ENCODE measurements at regions of chr9 and their contacts with region 1.

Region 1: DNA sequence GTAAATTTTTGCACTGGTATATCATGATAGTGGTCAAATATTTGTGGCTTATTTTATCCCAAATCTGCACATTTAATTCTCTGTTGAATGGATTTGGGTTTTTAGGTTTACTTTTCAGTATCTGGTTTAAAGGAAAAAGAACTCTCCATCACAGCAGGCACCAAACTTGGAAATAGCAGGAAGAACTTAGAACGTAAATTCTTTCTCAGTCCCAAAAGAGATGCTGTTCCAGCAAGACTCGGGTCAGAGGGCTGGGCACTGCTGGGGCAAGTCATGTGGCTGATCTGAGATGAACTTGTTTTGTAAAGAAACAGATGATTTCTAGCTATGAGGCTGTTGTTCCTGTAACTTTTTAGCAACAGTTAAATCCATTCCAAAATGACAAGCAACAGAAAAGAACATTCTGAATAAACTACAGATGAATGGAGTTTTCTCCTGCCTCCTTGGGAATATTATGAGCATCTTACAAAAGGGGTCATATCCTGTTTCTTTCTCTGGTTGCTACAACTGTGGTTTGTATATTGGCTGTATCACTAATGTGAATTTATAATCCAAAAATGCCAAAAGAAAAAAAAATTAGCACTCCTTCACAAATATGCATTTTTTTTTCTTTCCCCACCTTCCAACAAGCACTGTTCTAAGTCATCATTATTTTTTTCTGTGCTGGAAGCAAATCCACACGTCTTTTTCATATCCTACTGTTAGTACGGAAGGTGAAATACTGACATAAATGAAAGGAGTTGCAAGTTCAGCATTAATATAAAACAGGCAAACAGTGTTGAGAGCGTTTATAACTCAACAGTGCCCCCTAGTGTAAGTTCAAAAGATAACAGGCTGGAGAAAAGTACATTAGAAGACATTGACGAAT is 31.1 kb downstream of the OR2K2 start:
- DNase-seq: peak; percentile 20 to 69 (median 32)
- ATAC-seq: peak; percentile 74 to 87 (median 78)
- H3K4me3 ChIP-seq: peak overlapping the region in 3 of 12 donors; percentile 4 to 21 (median 19)
- H3K27ac ChIP-seq: peak overlapping the region in 10 of 12 donors; percentile 4 to 67 (median 29)
- H3K4me1 ChIP-seq: no peaks in the 10 kb centered on the region
- H3K27me3 ChIP-seq: peaks cover 0 to 6% (median 0%) of the 10 kb centered on the region in 9 donors
- CTCF ChIP-seq: peak; percentile 62 to 86 (median 79)
- POLR2A ChIP-seq: no peak

Region 2: GRCh38 chr9:110638381-110638954 is 660.5 kb before region 1 on chr9:
- intact Hi-C with region 1: loop called (anchors 1 to 5 kb)
- DNase-seq: no peak
- ATAC-seq: no peak
- H3K4me3 ChIP-seq: no peak overlapping the region
- H3K27ac ChIP-seq: no peak overlapping the region
- H3K4me1 ChIP-seq: no peaks in the 10 kb centered on the region
- H3K27me3 ChIP-seq: no peaks in the 10 kb centered on the region
- CTCF ChIP-seq: peak in 11 of 12 donors; percentile 13 to 58 (median 41)
- POLR2A ChIP-seq: no peak

Region 3: GRCh38 chr9:111198936-111199335 is 100.0 kb before region 1 on chr9:
- intact Hi-C with region 1: no loop called
- DNase-seq: no peak
- ATAC-seq: no peak
- H3K4me3 ChIP-seq: no peak overlapping the region
- H3K27ac ChIP-seq: no peak overlapping the region
- H3K4me1 ChIP-seq: no peaks in the 10 kb centered on the region
- H3K27me3 ChIP-seq: no peaks in the 10 kb centered on the region
- CTCF ChIP-seq: no peak
- POLR2A ChIP-seq: no peak